CD8-positive, alpha-beta memory T cell (primary cell): ENCODE measurements at regions of chr1 and their contacts with region 1.

Region 1: GRCh38 chr1:209844695-209845407 is 17.1 kb downstream of the UTP25 start:
- DNase-seq: no peak
- H3K4me3 ChIP-seq: no peak overlapping the region
- H3K4me3 Mint-ChIP-seq: no peak overlapping the region
- H3K27ac ChIP-seq: no peak overlapping the region
- H3K27ac Mint-ChIP-seq: no peak overlapping the region
- H3K4me1 ChIP-seq: no peaks in the 10 kb centered on the region
- H3K4me1 Mint-ChIP-seq: peaks cover 5 to 20% (median 17%) of the 10 kb centered on the region in 3 donors
- H3K27me3 ChIP-seq: no peaks in the 10 kb centered on the region
- H3K27me3 Mint-ChIP-seq: no peaks in the 10 kb centered on the region

Region 2: DNA sequence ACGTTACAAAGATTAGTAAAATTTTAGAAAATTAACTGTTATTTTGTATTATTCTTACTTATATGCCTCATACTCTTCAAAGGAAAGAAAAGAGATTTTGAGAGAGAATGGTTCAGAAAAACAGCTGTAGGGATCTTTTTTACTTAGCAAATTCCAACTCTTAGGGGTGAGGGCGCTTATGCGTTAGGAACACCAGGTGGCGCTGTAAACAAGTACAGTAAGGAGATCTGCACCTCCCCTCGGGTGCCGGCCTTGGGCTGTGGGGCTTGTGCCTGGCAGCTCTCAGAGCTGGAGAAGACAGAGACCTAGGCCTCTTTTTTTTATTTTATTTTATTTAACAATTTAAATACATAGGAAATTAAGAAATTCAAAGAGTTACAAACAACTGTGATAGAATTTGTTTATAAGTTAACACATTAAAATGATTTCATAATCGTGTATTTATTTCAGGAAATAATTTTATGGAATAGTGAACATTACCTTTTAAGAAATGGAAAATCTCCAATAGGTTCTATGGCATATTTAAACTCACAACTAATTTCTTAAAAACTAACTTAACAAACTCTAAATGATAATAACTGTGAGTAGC is 15.5 kb after region 1 on chr1:
- CTCF ChIA-PET with region 1: interaction called, 10 read pairs
- POLR2A ChIA-PET with region 1: no interaction called
- DNase-seq: peak; percentile 39 to 78 (median 53)
- H3K4me3 ChIP-seq: no peak overlapping the region
- H3K4me3 Mint-ChIP-seq: no peak overlapping the region
- H3K27ac ChIP-seq: no peak overlapping the region
- H3K27ac Mint-ChIP-seq: no peak overlapping the region
- H3K4me1 ChIP-seq: no peaks in the 10 kb centered on the region
- H3K4me1 Mint-ChIP-seq: no peaks in the 10 kb centered on the region
- H3K27me3 ChIP-seq: no peaks in the 10 kb centered on the region
- H3K27me3 Mint-ChIP-seq: peaks cover 17 to 28% of the 10 kb centered on the region in 2 donors